CD14-positive monocyte (primary cell): ENCODE measurements at regions of chr14 and their contacts with region 1.

Region 1: GRCh38 chr14:100654814-100655740 is 67.9 kb upstream of the BEGAIN start:
- DNase-seq: peak in 2 of 3 donors; percentile 21 to 37
- H3K4me3 ChIP-seq: no peak overlapping the region
- H3K4me3 Mint-ChIP-seq: no peak overlapping the region
- H3K27ac ChIP-seq: no peak overlapping the region
- H3K27ac Mint-ChIP-seq: no peak overlapping the region
- H3K4me1 ChIP-seq: peaks cover 0 to 6% of the 10 kb centered on the region in 2 donors
- H3K4me1 Mint-ChIP-seq: peaks cover 2% of the 10 kb centered on the region
- H3K27me3 ChIP-seq: peaks cover 0 to 9% of the 10 kb centered on the region in 2 donors
- H3K27me3 Mint-ChIP-seq: peaks cover 8 to 20% (median 18%) of the 10 kb centered on the region in 3 donors
- CTCF ChIP-seq: peak; percentile 89

Region 2: DNA sequence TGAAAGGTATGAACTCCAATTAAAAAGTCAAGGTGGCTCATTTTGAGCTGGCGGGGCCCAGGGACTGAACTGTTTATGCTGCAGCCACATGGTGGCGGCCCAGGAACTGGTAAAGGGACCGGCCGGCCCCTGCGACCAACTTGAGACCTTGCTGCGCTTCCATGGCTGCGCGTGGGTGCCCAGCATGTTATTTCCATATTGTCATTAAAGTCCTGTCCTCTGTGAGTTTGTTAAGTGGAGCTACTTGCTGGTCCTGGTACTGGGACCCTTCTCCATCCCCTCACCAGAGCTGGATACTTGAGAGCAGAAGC is 130.2 kb before region 1 on chr14:
- intact Hi-C with region 1: loop called in 1 of 2 experiments (anchors 5 kb)
- DNase-seq: peak in 2 of 3 donors; percentile 36 to 49
- H3K4me3 ChIP-seq: no peak overlapping the region
- H3K4me3 Mint-ChIP-seq: no peak overlapping the region
- H3K27ac ChIP-seq: no peak overlapping the region
- H3K27ac Mint-ChIP-seq: no peak overlapping the region
- H3K4me1 ChIP-seq: no peaks in the 10 kb centered on the region
- H3K4me1 Mint-ChIP-seq: no peaks in the 10 kb centered on the region
- H3K27me3 ChIP-seq: no peaks in the 10 kb centered on the region
- H3K27me3 Mint-ChIP-seq: peaks cover 0 to 1% (median 0%) of the 10 kb centered on the region in 3 donors
- CTCF ChIP-seq: no peak